Activated T-helper 1 cell treated with anti-CD3 and anti-CD28 coated beads, Interleukin-12 subunit alpha, Interleukin-12 subunit beta, Interleukin-2, Interleukin-4 antibody, amounts not matched to agents 30 ng/mL and 10 ng/mL and 1 ng/mL, durations not matched to agents 14 hours and 24 hours and 36 hours (primary cell): ENCODE measurements at regions of chr2 and their contacts with region 1.

Region 1: DNA sequence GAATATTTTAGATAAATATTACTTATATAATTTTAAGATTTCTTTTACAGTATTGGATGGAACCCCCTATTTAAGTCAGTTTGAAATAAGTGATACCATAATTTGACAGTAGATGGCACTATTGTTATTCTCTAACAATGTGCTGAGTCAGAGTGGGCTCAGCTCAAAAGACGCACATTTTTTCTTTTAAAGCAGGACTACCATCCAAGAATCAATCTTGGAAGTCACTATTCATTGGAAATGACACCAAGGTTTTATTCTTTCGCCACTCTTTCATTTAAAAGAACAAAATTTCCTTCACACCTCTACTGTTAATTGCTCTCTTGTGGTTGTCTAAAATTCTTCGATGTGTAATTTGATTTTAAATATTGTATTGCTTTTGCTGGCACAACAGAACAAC is 32.6 kb upstream of the SPAG16 start:
- DNase-seq: no peak
- H3K4me3 Mint-ChIP-seq: no peak overlapping the region
- H3K27ac Mint-ChIP-seq: no peak overlapping the region
- H3K4me1 Mint-ChIP-seq: no peaks in the 10 kb centered on the region
- H3K27me3 Mint-ChIP-seq: peaks cover 4% of the 10 kb centered on the region

Region 2: DNA sequence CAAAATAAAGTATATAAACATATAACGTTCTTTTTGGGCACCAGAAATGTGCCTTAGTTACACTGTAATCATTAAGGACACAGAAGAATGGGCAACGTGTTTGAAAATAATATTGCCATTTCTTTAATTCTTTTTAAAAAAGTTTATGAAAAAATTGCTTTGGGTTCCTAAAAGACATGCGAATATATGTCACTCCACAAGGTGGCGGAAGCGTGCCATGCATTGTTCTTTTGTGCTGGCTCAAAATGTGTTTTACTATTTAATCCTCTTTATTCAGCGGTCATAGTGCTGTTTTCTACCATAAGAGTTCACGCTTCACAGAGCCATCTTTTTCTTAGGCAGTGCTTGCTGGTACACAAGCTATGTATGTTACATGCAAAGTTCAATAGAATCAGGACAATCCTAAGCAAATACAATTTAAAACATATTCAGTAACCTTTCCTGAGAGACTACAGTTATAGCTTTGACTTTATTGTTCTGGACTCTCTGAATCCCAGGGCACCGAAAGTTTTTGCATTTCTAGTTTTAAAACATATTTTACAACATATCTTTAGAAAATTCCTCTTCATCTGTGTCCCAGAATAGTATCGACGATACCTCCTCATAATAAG is 565.2 kb before region 1 on chr2:
- intact Hi-C with region 1: loop called (anchors 1 kb)
- DNase-seq: peak; percentile 3
- H3K4me3 Mint-ChIP-seq: no peak overlapping the region
- H3K27ac Mint-ChIP-seq: no peak overlapping the region
- H3K4me1 Mint-ChIP-seq: no peaks in the 10 kb centered on the region
- H3K27me3 Mint-ChIP-seq: peaks cover under 1% of the 10 kb centered on the region

Region 3: DNA sequence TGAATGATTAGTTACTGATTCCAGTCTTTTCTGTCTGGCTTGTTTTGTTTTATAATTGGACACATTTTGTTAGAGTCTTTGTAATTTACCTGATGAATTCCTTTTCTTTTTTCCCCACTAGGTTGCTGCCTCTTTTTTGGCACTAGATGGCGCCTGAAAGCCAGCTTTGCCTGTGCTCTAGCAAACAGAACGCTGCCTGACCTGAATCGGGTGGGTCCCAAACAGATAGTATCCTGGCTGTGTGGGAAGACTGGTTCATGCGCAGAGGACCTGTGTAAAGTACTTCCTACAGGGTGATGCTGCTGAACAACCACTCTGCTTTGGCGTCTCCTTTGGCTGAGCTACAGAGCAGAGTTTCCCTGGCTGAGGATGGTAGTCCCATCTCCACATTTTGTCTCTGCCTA is 388.4 kb before region 1 on chr2:
- intact Hi-C with region 1: loop called (anchors 1 kb)
- DNase-seq: no peak
- H3K4me3 Mint-ChIP-seq: no peak overlapping the region
- H3K27ac Mint-ChIP-seq: no peak overlapping the region
- H3K4me1 Mint-ChIP-seq: no peaks in the 10 kb centered on the region
- H3K27me3 Mint-ChIP-seq: no peaks in the 10 kb centered on the region

Region 4: DNA sequence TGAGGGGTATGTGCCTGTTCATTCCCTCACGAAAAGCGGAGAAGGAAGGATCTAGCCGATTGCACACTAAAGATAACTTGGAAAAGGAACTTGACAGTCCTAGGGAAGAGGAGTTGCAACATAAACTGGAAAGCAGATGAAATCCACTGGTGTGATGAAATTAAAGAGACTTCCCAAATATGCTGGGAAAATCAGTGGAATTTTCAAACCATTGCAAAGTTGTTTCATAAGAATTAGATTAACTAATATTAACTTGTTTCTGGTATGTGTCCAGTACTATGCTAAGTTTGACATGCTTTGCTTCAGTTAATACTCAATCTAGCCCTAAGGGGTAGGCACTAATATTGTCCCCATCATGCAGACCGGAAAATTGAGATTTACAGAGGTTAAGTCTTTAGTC is 322.9 kb before region 1 on chr2:
- intact Hi-C with region 1: no loop called
- DNase-seq: no peak
- H3K4me3 Mint-ChIP-seq: no peak overlapping the region
- H3K27ac Mint-ChIP-seq: no peak overlapping the region
- H3K4me1 Mint-ChIP-seq: no peaks in the 10 kb centered on the region
- H3K27me3 Mint-ChIP-seq: peaks cover 2% of the 10 kb centered on the region

Region 5: GRCh38 chr2:213284105-213285090 is 32.8 kb after region 1 on chr2 and contains the start of gene SPAG16:
- intact Hi-C with region 1: loop called (anchors 1 kb)
- DNase-seq: peak; percentile 98
- H3K4me3 Mint-ChIP-seq: peak within 1 kb of the TSS; percentile 90
- H3K27ac Mint-ChIP-seq: peak within 1 kb of the TSS; percentile 84
- H3K4me1 Mint-ChIP-seq: peaks cover 25% of the 10 kb centered on the region
- H3K27me3 Mint-ChIP-seq: peaks cover 2% of the 10 kb centered on the region
- total RNA-seq, gene SPAG16: 7.3 TPM in 2 replicates

Region 6: GRCh38 chr2:213336253-213336770 is 84.7 kb after region 1 on chr2:
- intact Hi-C with region 1: no loop called
- DNase-seq: no peak
- H3K4me3 Mint-ChIP-seq: no peak overlapping the region
- H3K27ac Mint-ChIP-seq: no peak overlapping the region
- H3K4me1 Mint-ChIP-seq: no peaks in the 10 kb centered on the region
- H3K27me3 Mint-ChIP-seq: no peaks in the 10 kb centered on the region

Region 7: DNA sequence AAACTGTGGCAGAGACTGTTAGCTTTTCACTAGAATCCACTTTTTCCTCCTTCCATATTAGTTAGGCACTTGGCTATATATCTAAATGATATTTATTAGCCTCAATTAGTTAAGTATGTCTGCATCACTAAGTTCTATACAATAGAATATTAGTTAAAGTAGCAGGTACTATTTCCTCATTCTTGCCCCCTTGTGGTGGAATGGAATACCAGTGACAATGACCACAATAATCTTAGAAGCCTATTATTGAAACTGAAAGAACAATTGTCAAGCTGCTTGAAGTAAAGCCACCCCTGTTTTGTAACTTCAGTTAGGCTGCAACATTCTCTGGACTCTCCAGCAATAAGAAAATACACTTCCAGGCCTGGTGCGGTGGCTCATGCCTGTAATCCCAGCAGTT is 682.9 kb after region 1 on chr2:
- intact Hi-C with region 1: loop called (anchors 1 kb)
- DNase-seq: no peak
- H3K4me3 Mint-ChIP-seq: no peak overlapping the region
- H3K27ac Mint-ChIP-seq: no peak overlapping the region
- H3K4me1 Mint-ChIP-seq: no peaks in the 10 kb centered on the region
- H3K27me3 Mint-ChIP-seq: peaks cover 1% of the 10 kb centered on the region

Region 8: GRCh38 chr2:214830794-214831346 is 1579.3 kb after region 1 on chr2:
- intact Hi-C with region 1: loop called (anchors 5 kb)
- DNase-seq: no peak
- H3K4me3 Mint-ChIP-seq: no peak overlapping the region
- H3K27ac Mint-ChIP-seq: no peak overlapping the region
- H3K4me1 Mint-ChIP-seq: no peaks in the 10 kb centered on the region
- H3K27me3 Mint-ChIP-seq: peaks cover 12% of the 10 kb centered on the region

Region 9: GRCh38 chr2:215002500-215002899 is 1750.9 kb after region 1 on chr2:
- intact Hi-C with region 1: loop called (anchors 2 kb)
- DNase-seq: no peak
- H3K4me3 Mint-ChIP-seq: no peak overlapping the region
- H3K27ac Mint-ChIP-seq: no peak overlapping the region
- H3K4me1 Mint-ChIP-seq: no peaks in the 10 kb centered on the region
- H3K27me3 Mint-ChIP-seq: no peaks in the 10 kb centered on the region